Lower leg skin (tissue), 4 donors: ENCODE measurements at regions of chr18 and their contacts with region 1.

Region 1: GRCh38 chr18:62979009-62979575 is 263.8 kb downstream of the PHLPP1 start:
- DNase-seq: peak in 1 of 2 donors; percentile 87
- H3K4me3 ChIP-seq: no peak overlapping the region
- CTCF ChIP-seq: no peak
- POLR2A ChIP-seq: no peak

Region 2: GRCh38 chr18:62131301-62131909 is 847.7 kb before region 1 on chr18:
- intact Hi-C with region 1: no loop called
- DNase-seq: no peak
- H3K4me3 ChIP-seq: no peak overlapping the region
- CTCF ChIP-seq: peak in 1 of 3 donors; percentile 88
- POLR2A ChIP-seq: no peak

Region 3: GRCh38 chr18:62584241-62585120 is 394.6 kb before region 1 on chr18:
- intact Hi-C with region 1: loop called (anchors 10 kb)
- DNase-seq: peak; percentile 85 to 97
- H3K4me3 ChIP-seq: no peak overlapping the region
- CTCF ChIP-seq: peak in 1 of 3 donors; percentile 92
- POLR2A ChIP-seq: no peak

Region 4: DNA sequence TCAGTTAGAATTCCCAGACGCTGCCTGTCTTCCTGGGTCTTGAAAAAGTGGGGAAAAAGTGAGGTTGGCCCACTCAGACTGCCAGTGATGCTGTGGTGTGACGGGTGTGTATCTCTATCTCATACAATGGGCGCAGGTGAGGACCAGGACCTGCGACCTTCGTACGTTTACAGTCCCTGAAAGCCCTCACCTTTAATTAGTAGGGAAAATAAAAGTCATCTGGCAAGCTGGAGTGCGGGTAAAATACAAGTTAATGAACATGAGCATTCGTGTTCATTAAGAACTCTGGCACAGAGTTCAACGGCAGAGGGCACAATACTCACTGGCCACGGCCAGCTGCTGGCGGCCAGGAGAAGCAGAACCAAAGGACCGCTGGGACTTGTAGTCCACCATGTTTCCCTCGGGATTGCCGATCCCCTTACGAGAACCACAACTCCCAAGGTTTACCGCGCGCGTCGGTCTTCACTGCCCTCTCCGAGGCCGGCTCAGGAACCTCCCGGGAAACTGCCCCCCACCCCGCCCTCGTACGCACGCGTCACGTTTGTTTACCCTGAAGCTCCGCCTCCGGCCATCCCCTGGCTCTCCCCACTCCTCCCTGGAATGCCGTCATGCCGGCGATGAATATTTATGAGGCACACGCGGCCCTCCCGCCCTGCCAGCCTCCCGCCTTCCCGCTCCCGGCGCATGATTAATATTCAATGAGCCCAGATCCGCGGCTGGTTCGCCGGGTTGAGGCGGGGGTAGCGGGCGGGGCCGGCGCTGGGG is 264.2 kb before region 1 on chr18:
- intact Hi-C with region 1: loop called (anchors 10 kb)
- DNase-seq: peak; percentile 99 to 100
- H3K4me3 ChIP-seq: no peak overlapping the region
- CTCF ChIP-seq: no peak
- POLR2A ChIP-seq: no peak